AG04449 (cell line): ENCODE measurements at regions of chr3 and their contacts with region 1.

Region 1: DNA sequence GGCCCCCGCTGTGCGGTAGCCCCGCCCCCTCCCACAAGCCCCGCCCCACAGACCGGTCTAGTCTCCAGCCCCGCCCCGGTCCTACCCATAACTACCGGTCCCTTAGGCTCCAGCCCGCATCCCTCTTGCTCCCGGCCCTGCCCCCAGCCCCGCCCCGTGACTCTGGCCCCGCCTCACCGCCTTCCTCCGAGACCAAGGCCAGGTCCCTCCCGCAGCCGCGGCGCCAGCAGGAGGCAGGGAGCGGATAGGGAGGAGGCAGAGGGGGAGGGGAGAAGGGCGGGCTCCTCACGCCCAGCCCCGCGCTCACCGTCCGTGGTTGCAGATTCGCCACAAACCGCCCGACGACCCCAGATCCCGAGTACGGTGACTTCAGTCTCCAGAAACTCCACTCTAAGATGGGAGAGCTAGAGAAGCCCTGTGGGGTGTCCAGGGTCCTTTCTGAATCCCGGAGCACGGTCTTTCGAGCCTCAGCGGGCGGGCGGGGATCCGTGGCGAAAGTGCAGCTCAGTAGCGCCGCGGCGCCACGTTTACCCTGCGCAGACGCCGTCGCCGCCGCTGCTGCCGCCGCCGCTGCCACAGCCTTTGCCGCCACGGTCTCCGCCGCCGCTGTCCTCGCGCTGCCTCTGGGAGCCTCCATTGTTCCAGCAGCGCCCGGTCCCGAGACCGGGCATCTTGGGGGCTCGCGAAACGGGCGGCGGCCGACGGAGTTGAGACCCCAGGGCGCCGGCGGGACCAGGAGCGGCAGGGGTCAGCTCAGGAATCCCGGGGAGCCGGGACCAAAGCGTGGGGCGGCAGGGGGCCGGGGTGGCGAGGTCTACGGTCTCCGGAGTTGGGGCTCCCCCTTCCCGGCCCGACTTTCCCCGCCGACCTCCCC is at the start of gene BRPF1:
- DNase-seq: peak; percentile 92
- H3K4me3 ChIP-seq: peak within 1 kb of the TSS; percentile 89
- CTCF ChIP-seq: peak; percentile 51

Region 2: GRCh38 chr3:9715764-9716437 is 15.5 kb before region 1 on chr3:
- CTCF ChIA-PET with region 1: interaction called, 10 read pairs
- POLR2A ChIA-PET with region 1: interaction called, 3 read pairs
- DNase-seq: peak; percentile 29
- H3K4me3 ChIP-seq: no peak overlapping the region
- CTCF ChIP-seq: peak; percentile 78

Region 3: GRCh38 chr3:9743548-9743947 is 12.1 kb after region 1 on chr3:
- CTCF ChIA-PET with region 1: interaction called, 18 read pairs
- POLR2A ChIA-PET with region 1: interaction called, 24 read pairs
- DNase-seq: no peak
- H3K4me3 ChIP-seq: no peak overlapping the region
- CTCF ChIP-seq: no peak

Region 4: DNA sequence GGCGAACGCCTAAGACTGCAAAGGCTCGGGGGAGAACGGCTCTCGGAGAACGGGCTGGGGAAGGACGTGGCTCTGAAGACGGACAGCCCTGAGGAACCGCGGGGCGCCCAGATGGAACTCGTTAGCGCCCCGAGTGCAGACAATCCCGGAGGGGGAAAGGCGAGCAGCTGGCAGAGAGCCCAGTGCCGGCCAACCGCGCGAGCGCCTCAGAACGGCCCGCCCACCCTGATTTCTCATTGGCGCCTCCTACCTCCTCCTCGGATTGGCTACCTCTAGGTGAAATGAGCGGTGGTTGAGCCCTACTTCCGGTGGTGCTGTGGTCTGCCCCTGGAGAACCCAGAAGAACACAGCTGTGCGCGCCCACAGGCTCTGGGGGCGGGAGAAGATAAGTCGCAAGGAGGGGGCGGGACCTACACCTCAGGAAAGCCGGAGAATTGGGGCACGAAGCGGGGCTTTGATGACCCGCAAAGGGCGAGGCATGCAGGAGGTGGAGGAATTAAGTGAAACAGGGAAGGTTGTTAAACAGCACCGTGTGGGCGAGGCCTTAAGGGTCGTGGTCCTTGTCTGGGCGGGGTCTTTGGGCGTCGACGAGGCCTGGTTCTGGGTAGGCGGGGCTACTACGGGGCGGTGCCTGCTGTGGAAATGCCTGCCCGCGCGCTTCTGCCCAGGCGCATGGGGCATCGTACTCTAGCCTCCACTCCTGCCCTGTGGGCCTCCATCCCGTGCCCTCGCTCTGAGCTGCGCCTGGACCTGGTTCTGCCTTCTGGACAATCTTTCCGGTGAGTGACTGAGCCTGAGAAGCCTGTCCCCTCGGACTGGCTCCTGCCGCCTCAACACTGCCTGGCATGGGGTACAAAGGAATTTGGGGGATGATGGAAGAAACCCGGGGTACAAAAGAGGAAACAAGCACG is 18.5 kb after region 1 on chr3 and contains the start of gene OGG1:
- CTCF ChIA-PET with region 1: interaction called, 9 read pairs
- POLR2A ChIA-PET with region 1: interaction called, 24 read pairs
- DNase-seq: peak; percentile 84
- H3K4me3 ChIP-seq: peak within 1 kb of the TSS; percentile 92
- CTCF ChIP-seq: no peak